HepG2 (cell line): ENCODE measurements at regions of chr1 and their contacts with region 1.

Region 1: DNA sequence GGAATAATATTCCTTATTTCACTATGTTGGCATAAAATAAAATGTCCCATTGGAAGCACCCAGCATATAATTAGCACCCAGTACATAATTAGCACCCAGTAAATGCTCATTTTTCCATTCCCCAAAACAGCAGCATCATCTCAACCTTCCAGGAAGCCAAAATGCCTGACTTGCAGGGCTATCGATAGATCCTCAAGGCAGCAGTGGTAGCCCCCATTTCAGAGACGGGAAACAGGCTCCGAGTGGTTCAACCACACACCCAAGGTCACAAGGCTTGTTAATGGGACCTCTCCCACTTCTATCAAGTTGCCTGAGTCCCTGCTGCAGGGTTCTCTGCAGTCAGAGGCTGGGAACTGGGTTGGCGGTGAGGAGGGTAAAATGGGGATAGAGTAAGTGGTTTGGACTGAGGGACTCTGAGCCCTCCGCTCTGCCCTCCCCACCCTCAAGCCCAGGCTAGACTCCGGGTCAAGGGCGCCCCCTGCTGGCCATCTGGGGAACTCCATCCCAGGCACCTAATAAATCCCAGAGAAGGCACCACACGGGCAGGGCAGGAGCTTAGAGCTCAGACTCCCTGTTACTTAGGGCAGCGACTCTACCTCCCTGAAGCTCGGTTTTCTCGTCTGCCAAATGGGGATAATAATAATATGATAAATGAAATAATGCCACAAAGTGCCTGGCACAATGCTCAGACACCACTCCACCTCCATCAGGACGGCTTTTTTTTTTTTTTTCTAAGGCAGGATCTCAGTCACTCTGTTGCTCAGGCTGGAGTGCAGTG is 21.9 kb upstream of the LAPTM5 start:
- DNase-seq: peak; percentile 59
- ATAC-seq: peak; percentile 58
- H3K4me3 ChIP-seq: no peak overlapping the region
- H3K27ac ChIP-seq: no peak overlapping the region
- H3K4me1 ChIP-seq: peaks cover 22% of the 10 kb centered on the region
- H3K27me3 ChIP-seq: peaks cover 0 to 3% of the 10 kb centered on the region in 2 experiments; a peak in 1 of 5 replicates
- CTCF ChIP-seq: peak; percentile 94
- EP300 ChIP-seq: no peak
- POLR2A ChIP-seq: no peak
- RAD21 ChIP-seq: peak; percentile 85

Region 2: GRCh38 chr1:30718636-30719405 is 60.7 kb before region 1 on chr1:
- CTCF ChIA-PET with region 1: interaction called, 73 read pairs
- POLR2A ChIA-PET with region 1: interaction called, 21 read pairs
- in situ Hi-C with region 1: loop called (anchors 5 kb)
- intact Hi-C with region 1: loop called (anchors 1 kb)
- DNase-seq: peak; percentile 84
- ATAC-seq: peak; percentile 79
- H3K4me3 ChIP-seq: peak overlapping the region; percentile 23 to 74 (median 55); a peak in 5 of 6 replicates
- H3K27ac ChIP-seq: peak overlapping the region; percentile 60
- H3K4me1 ChIP-seq: peaks cover 11% of the 10 kb centered on the region
- H3K27me3 ChIP-seq: no peaks in the 10 kb centered on the region
- CTCF ChIP-seq: peak; percentile 98
- EP300 ChIP-seq: no peak
- POLR2A ChIP-seq: peak; percentile 45 to 75; a peak in 2 of 4 replicates
- RAD21 ChIP-seq: peak; percentile 98

Region 3: DNA sequence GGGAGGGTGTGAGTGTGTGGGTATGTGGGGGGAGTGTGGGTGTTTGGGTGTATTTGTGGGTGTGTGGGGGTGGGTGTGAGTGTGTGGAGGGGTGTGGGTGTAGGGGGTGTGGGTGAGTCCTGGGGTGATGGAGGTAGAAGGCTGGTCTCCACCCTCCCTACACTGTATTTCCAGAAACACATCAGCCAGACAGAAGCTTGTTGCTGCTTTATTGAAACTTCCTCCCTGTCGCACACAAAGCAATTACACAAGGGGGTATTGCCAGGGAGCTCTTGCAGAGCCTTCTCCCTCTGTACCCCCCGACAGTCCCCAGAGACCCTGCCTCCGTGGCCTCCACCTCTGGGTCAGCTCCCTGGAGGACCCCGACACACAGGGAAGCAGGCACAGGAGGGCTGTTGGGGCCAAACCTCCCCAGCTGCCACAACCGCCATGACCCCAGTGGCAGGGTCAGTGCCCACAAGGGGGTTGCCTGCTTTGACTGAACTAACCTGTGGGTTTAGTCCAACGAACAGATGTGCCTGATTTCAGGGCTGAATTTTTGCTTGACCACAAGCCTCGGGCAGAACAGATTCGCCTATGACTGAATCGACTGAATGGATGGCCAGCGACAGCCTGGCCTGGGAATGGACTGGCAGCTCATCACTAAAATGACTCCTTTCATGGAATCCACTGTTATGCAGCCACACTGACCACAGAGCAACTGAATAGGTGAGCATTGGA is 47.0 kb before region 1 on chr1:
- CTCF ChIA-PET with region 1: no interaction called
- POLR2A ChIA-PET with region 1: no interaction called
- in situ Hi-C with region 1: no loop called
- intact Hi-C with region 1: no loop called
- DNase-seq: no peak
- ATAC-seq: no peak
- H3K4me3 ChIP-seq: no peak overlapping the region
- H3K27ac ChIP-seq: no peak overlapping the region
- H3K4me1 ChIP-seq: no peaks in the 10 kb centered on the region
- H3K27me3 ChIP-seq: peaks cover 2 to 10% of the 10 kb centered on the region in 2 experiments; a peak in 4 of 5 replicates
- CTCF ChIP-seq: no peak
- EP300 ChIP-seq: no peak
- POLR2A ChIP-seq: no peak
- RAD21 ChIP-seq: no peak

Region 4: DNA sequence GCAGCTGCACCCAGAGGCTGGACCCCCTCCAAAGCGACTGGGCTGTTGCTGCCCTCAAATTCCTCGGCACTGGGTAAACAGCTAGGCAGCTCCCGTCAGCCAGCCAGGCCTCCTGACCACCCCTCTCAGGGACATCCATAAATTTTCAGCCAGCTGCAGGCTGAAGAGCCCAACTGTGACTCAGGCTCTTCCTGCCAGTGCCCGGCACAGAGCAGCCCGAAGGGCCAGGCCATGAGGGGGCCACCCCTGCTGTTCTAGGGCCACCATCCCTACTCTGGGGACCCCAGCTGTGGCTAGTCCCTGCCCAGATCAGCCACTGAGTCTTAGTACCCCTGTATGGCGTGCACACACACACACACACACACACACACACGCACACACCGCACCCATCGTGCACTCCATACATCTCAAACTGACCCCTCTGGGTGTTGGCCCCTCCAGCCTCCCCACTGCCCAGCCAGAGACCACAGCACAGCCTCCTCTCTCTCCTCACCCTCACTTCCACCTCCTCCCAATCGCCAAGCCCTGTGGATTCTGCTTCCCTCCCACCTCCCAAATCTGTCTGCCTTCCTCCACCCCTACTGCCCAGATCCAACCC is 15.7 kb before region 1 on chr1:
- CTCF ChIA-PET with region 1: no interaction called
- POLR2A ChIA-PET with region 1: no interaction called
- in situ Hi-C with region 1: no loop called
- intact Hi-C with region 1: no loop called
- DNase-seq: no peak
- ATAC-seq: no peak; the same call in 2 of the 3 replicates
- H3K4me3 ChIP-seq: no peak overlapping the region
- H3K27ac ChIP-seq: no peak overlapping the region
- H3K4me1 ChIP-seq: peaks cover 12% of the 10 kb centered on the region
- H3K27me3 ChIP-seq: peaks cover 4 to 32% of the 10 kb centered on the region in 2 experiments; a peak in 3 of 5 replicates
- CTCF ChIP-seq: no peak
- EP300 ChIP-seq: no peak
- POLR2A ChIP-seq: no peak
- RAD21 ChIP-seq: no peak

Region 5: GRCh38 chr1:30911046-30911954 is 131.8 kb after region 1 on chr1:
- CTCF ChIA-PET with region 1: interaction called, 16 read pairs
- POLR2A ChIA-PET with region 1: no interaction called
- in situ Hi-C with region 1: no loop called
- intact Hi-C with region 1: loop called (anchors 1 kb)
- DNase-seq: peak; percentile 54
- ATAC-seq: peak; percentile 70
- H3K4me3 ChIP-seq: no peak overlapping the region
- H3K27ac ChIP-seq: no peak overlapping the region
- H3K4me1 ChIP-seq: peaks cover 26% of the 10 kb centered on the region
- H3K27me3 ChIP-seq: peaks cover 6 to 36% of the 10 kb centered on the region in 2 experiments
- CTCF ChIP-seq: peak; percentile 91
- EP300 ChIP-seq: no peak
- POLR2A ChIP-seq: no peak
- RAD21 ChIP-seq: peak; percentile 93

Region 6: GRCh38 chr1:30929135-30929889 is 149.8 kb after region 1 on chr1:
- CTCF ChIA-PET with region 1: interaction called, 15 read pairs
- POLR2A ChIA-PET with region 1: no interaction called
- in situ Hi-C with region 1: no loop called
- intact Hi-C with region 1: loop called (anchors 2 kb)
- DNase-seq: peak; percentile 68
- ATAC-seq: peak; percentile 77
- H3K4me3 ChIP-seq: no peak overlapping the region
- H3K27ac ChIP-seq: no peak overlapping the region
- H3K4me1 ChIP-seq: peaks cover 13% of the 10 kb centered on the region
- H3K27me3 ChIP-seq: no peaks in the 10 kb centered on the region
- CTCF ChIP-seq: peak; percentile 86
- EP300 ChIP-seq: no peak
- POLR2A ChIP-seq: 0 out of 4 replicates have a peak, but pooled peaks of 1 of the 2 experiments have one; percentile 18
- RAD21 ChIP-seq: peak; percentile 56